Heart right ventricle (tissue), 16 donors: ENCODE measurements at regions of chr10 and their contacts with region 1.

Region 1: GRCh38 chr10:88386821-88387773 is 196.0 kb downstream of the RNLS start:
- DNase-seq: peak in 1 of 2 donors; percentile 57
- ATAC-seq: peak; percentile 82 to 93 (median 92)
- H3K4me3 ChIP-seq: peak overlapping the region in 7 of 10 donors; percentile 9 to 39 (median 31)
- H3K27ac ChIP-seq: peak overlapping the region; percentile 1 to 75 (median 56)
- H3K4me1 ChIP-seq: peaks cover 0 to 54% (median 29%) of the 10 kb centered on the region in 9 donors
- H3K27me3 ChIP-seq: no peaks in the 10 kb centered on the region
- CTCF ChIP-seq: no peak

Region 2: GRCh38 chr10:87850742-87851205 is 536.3 kb before region 1 on chr10:
- intact Hi-C with region 1: loop called in 2 of 10 experiments (anchors 5 kb)
- DNase-seq: peak; percentile 24 to 67
- ATAC-seq: peak; percentile 79 to 98 (median 92)
- H3K4me3 ChIP-seq: no peak overlapping the region
- H3K27ac ChIP-seq: no peak overlapping the region
- H3K4me1 ChIP-seq: peaks cover 0 to 5% (median 0%) of the 10 kb centered on the region in 9 donors
- H3K27me3 ChIP-seq: no peaks in the 10 kb centered on the region
- CTCF ChIP-seq: peak; percentile 37 to 79 (median 71)

Region 3: GRCh38 chr10:88114368-88114767 is 272.7 kb before region 1 on chr10:
- intact Hi-C with region 1: loop called in 4 of 10 experiments (anchors 10 kb)
- DNase-seq: peak; percentile 20 to 48
- ATAC-seq: peak; percentile 66 to 91 (median 84)
- H3K4me3 ChIP-seq: no peak overlapping the region
- H3K27ac ChIP-seq: no peak overlapping the region
- H3K4me1 ChIP-seq: peaks cover 0 to 63% (median 7%) of the 10 kb centered on the region in 9 donors
- H3K27me3 ChIP-seq: no peaks in the 10 kb centered on the region
- CTCF ChIP-seq: peak; percentile 12 to 75 (median 65)

Region 4: GRCh38 chr10:88152720-88153119 is 234.4 kb before region 1 on chr10:
- intact Hi-C with region 1: loop called in 2 of 10 experiments (anchors 2 to 10 kb)
- DNase-seq: no peak
- ATAC-seq: peak in 5 of 8 donors; percentile 65 to 90 (median 70)
- H3K4me3 ChIP-seq: no peak overlapping the region
- H3K27ac ChIP-seq: peak overlapping the region in 3 of 10 donors; percentile 46 to 83 (median 54)
- H3K4me1 ChIP-seq: peaks cover 0 to 24% (median 5%) of the 10 kb centered on the region in 9 donors
- H3K27me3 ChIP-seq: no peaks in the 10 kb centered on the region
- CTCF ChIP-seq: no peak

Region 5: DNA sequence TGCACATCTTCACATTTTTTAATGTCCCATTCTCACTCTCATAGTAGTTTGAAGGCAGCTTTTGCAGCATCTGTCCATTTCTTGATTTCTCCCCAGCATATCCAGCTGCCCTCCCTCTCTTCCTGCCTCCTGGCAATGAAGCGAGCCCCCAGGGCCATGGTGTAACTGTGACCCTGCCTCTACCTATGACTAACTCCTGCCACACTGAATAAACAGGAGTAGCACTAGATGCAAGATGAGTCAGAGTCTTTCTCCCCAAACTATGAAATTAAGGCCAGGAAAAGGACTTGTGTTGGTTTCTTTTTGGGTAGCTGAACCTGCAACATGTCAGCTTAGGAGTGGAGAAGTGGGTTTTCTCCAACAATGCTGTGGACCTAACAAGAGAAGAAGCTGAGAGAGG is 133.0 kb before region 1 on chr10:
- intact Hi-C with region 1: loop called in 5 of 10 experiments (anchors 2 to 10 kb)
- DNase-seq: no peak
- ATAC-seq: peak in 1 of 8 donors; percentile 72
- H3K4me3 ChIP-seq: no peak overlapping the region
- H3K27ac ChIP-seq: peak overlapping the region in 3 of 10 donors; percentile 2 to 87 (median 26)
- H3K4me1 ChIP-seq: peaks cover 0 to 31% (median 3%) of the 10 kb centered on the region in 9 donors
- H3K27me3 ChIP-seq: no peaks in the 10 kb centered on the region
- CTCF ChIP-seq: no peak

Region 6: DNA sequence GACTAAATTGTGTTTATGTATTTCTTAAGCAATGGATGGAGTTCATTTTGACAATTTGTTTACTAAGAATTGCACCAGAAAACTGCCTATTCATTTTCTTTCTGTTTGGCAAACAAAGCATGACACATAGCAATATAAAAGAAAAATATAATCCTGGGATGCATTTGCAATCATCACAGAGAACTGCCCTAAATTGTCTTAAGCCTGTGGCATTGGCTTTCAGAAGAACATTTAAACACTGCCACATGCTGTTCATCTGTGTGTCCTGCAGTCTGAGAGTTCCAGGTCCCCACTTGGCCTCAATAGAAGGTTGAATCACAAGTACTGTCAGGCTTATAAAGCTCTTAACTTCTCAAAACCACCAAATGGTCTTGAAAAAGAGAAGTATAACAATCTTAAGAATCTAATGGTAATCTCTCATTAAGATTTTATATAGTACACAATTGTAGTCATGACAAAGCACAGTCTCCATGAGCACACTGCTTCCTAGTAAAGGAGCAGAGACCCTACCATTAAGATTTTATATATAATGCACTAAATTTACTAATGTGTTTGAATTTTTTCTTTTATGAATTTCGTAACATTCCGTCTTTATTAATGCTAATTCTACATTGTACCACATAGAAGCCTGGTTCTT is 166.1 kb after region 1 on chr10:
- intact Hi-C with region 1: loop called in 2 of 10 experiments (anchors 10 kb)
- DNase-seq: peak in 1 of 2 donors; percentile 54
- ATAC-seq: peak; percentile 72 to 96 (median 86)
- H3K4me3 ChIP-seq: no peak overlapping the region
- H3K27ac ChIP-seq: no peak overlapping the region
- H3K4me1 ChIP-seq: peaks cover 0 to 3% (median 0%) of the 10 kb centered on the region in 9 donors
- H3K27me3 ChIP-seq: no peaks in the 10 kb centered on the region
- CTCF ChIP-seq: peak; percentile 44 to 85 (median 78)